Naive thymus-derived CD8-positive, alpha-beta T cell (primary cell): ENCODE measurements at regions of chr10 and their contacts with region 1.

Region 1: DNA sequence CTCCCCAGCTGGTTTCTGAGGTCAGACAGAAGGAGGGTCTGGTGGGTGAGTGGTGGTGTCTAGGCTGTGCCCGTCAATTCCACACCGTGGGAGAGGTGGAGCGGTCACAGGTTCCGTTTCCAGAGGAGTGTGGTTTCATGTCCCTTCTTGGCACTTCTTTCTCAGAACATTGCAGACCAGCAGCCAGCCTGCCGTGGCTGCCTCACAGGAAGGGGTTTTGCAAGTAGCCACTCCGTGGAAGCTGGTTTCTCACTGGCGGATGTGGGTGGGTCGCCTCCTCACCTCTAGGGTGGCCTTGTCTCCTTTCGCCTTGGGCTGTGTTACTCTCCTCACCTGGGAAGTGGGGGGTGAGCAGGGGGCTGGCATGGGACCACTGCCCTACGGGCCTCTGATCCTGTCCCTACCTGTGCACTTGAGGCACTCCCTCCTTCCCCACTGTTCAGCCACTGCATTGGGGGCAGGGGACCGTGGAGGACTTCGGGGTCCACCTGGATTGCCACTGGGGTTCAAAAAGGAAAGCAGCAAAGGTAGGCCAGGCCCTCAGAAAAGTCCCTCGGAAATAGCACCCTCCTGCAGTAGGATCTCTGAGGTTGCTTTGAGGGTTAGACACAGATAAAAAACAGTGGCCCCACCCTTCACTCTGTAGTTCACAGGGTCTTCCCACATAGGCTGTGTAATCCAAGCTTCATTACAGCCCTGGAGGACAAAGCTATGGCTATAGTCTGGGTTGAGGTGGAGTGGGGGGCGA is 33.9 kb downstream of the TSPAN14 start:
- DNase-seq: peak in 8 of 10 donors; percentile 42 to 80 (median 64)
- ATAC-seq: peak; percentile 72 to 79
- H3K4me3 Mint-ChIP-seq: peak overlapping the region; percentile 71 to 91 (median 80)
- H3K27ac Mint-ChIP-seq: peak overlapping the region; percentile 83 to 98 (median 95)
- H3K4me1 Mint-ChIP-seq: peaks cover 60 to 98% (median 93%) of the 10 kb centered on the region in 4 donors
- H3K27me3 Mint-ChIP-seq: no peaks in the 10 kb centered on the region

Region 2: GRCh38 chr10:80498833-80499741 is 11.1 kb after region 1 on chr10:
- POLR2A ChIA-PET with region 1: interaction called, 205 read pairs
- DNase-seq: peak in 2 of 10 donors; percentile 21 to 43
- ATAC-seq: peak; percentile 13 to 32
- H3K4me3 Mint-ChIP-seq: peak overlapping the region; percentile 64 to 87 (median 84)
- H3K27ac Mint-ChIP-seq: peak overlapping the region; percentile 91 to 98 (median 95)
- H3K4me1 Mint-ChIP-seq: peaks cover 65 to 99% (median 96%) of the 10 kb centered on the region in 4 donors
- H3K27me3 Mint-ChIP-seq: no peaks in the 10 kb centered on the region

Region 3: DNA sequence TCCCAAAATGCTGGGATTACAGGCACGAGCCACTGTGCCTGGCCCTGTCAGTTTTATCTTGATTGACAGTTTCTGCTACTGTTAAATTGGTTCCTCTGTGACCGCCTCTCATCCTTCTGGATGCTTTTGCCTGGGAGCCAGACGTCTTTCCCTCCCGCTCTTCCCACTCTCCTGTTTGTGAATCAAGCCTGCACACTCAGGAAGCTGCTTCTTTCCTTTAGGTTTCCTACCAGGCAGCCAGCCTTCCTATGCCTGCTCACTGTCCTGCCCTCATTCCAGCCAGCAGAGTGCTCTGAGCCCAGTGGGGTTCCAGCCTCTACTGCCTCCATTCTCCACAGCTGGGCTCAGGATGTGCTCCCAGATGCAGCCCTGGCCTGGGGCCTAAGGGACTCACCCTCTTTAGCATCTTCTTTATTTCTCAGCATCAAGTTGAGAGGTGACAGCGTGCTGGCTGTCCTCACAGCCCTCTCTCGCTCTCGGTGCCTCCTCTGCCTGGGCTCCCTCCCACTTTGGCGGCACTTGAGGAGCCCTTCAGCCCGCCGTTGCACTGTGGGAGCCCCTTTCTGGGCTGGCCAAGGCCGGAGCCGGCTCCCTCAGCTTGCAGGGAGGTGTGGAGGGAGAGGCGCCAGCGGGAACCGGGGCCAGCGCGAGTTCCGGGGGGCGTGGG is 54.8 kb after region 1 on chr10:
- POLR2A ChIA-PET with region 1: no interaction called
- DNase-seq: no peak
- ATAC-seq: no peak
- H3K4me3 Mint-ChIP-seq: no peak overlapping the region
- H3K27ac Mint-ChIP-seq: no peak overlapping the region
- H3K4me1 Mint-ChIP-seq: peaks cover 0 to 29% (median 9%) of the 10 kb centered on the region in 4 donors
- H3K27me3 Mint-ChIP-seq: peaks cover 0 to 4% (median 0%) of the 10 kb centered on the region in 5 donors